ENCODE measurements at regions of chr11 and their contacts with region 1.

Region 1: GRCh38 chr11:60831143-60831500 is 10.8 kb upstream of the CCDC86 start:
- DNase-seq: peak; percentile 62
- H3K4me3 Mint-ChIP-seq: no peak overlapping the region
- H3K27ac Mint-ChIP-seq: no peak overlapping the region
- H3K4me1 Mint-ChIP-seq: peaks cover 12% of the 10 kb centered on the region
- H3K27me3 Mint-ChIP-seq: no peaks in the 10 kb centered on the region

Region 2: GRCh38 chr11:60775420-60775961 is 55.6 kb before region 1 on chr11:
- intact Hi-C with region 1: loop called (anchors 5 kb)
- DNase-seq: peak; percentile 69
- H3K4me3 Mint-ChIP-seq: no peak overlapping the region
- H3K27ac Mint-ChIP-seq: no peak overlapping the region
- H3K4me1 Mint-ChIP-seq: peaks cover 5% of the 10 kb centered on the region
- H3K27me3 Mint-ChIP-seq: peaks cover 8% of the 10 kb centered on the region

Region 3: GRCh38 chr11:60887556-60887955 is 56.4 kb after region 1 on chr11:
- intact Hi-C with region 1: loop called (anchors 1 kb)
- DNase-seq: no peak
- H3K4me3 Mint-ChIP-seq: no peak overlapping the region
- H3K27ac Mint-ChIP-seq: no peak overlapping the region
- H3K4me1 Mint-ChIP-seq: peaks cover 12% of the 10 kb centered on the region
- H3K27me3 Mint-ChIP-seq: no peaks in the 10 kb centered on the region

Region 4: DNA sequence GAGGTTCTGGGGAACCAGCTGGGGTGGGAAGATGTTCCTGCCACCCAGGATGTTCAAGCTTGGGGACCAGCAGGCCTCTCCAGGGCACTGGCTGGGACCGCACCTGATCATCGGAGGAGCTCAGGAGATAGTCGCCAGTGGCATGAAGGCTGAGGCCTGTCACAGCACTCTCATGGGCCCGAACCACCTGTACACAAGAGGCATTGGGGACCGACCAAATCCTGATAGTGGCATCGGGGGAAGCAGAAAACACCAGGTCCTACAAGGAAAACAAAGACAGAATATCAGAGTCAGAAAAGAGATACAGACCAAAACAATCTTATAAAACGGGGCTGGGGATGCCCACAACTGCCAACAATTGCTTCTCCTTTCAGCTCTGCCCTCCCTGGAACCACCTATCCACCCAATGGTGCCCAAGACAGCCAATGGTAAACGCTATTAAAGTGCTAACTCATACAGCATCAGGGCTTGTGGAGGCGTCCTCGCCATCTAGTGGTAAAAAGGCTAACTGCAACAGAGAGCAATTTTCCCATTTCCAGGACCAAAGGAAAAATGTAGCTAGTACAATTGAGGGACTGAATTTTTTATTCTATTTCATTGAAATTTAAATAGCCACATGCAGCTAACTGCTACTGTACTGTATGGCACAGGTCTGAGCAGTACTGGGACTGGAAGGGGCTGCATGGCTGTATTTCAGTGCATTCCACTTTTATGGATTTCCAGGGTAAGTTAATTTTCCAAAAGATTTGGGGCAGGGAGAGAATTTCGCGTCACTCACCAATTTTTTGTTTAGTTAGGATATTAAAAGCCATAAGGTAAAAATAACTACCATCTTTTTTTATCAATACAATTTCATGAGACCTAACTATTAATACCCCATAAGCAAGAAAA is 68.2 kb after region 1 on chr11:
- intact Hi-C with region 1: loop called (anchors 1 kb)
- DNase-seq: no peak
- H3K4me3 Mint-ChIP-seq: no peak overlapping the region
- H3K27ac Mint-ChIP-seq: peak overlapping the region; percentile 12
- H3K4me1 Mint-ChIP-seq: peaks cover 10% of the 10 kb centered on the region
- H3K27me3 Mint-ChIP-seq: no peaks in the 10 kb centered on the region

Measured in activated T-helper 1 cell treated with anti-CD3 and anti-CD28 coated beads, Interleukin-12 subunit alpha, Interleukin-12 subunit beta, Interleukin-2, Interleukin-4 antibody, amounts not matched to agents 30 ng/mL and 10 ng/mL and 1 ng/mL, durations not matched to agents 14 hours and 24 hours and 36 hours (primary cell).